ENCODE measurements at regions of chr17 and their contacts with region 1.

Region 1: GRCh38 chr17:7136266-7136877 is 21.8 kb upstream of the ASGR2 start:
- DNase-seq: peak; percentile 84
- ATAC-seq: no peak
- H3K4me3 Mint-ChIP-seq: no peak overlapping the region
- H3K27ac Mint-ChIP-seq: no peak overlapping the region
- H3K4me1 Mint-ChIP-seq: peaks cover 10% of the 10 kb centered on the region
- H3K27me3 Mint-ChIP-seq: peaks cover 4% of the 10 kb centered on the region

Region 2: DNA sequence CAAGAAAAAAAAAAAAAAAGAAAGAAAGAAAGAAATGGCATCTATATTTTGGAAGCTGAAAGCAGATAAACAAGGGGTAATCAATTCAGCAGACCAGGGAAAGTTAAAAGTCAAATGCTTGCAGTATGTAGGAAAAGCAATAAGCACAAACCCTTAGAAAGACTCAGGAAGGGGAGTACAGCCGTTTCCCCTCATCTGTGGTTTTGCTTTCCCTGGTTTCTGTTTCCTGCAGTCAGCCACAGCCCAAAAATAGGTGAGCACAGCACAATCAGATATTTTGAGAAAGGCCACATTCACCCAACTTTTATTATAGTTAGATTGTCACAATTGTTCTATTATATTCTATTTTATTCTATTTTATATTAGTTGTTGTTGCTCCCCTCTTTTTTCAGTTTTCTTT is 154.9 kb before region 1 on chr17:
- CTCF ChIA-PET with region 1: no interaction called
- POLR2A ChIA-PET with region 1: no interaction called
- DNase-seq: peak; percentile 27
- ATAC-seq: no peak
- H3K4me3 Mint-ChIP-seq: peak overlapping the region; percentile 18
- H3K27ac Mint-ChIP-seq: no peak overlapping the region
- H3K4me1 Mint-ChIP-seq: peaks cover 26% of the 10 kb centered on the region
- H3K27me3 Mint-ChIP-seq: no peaks in the 10 kb centered on the region

Region 3: GRCh38 chr17:7081341-7082062 is 54.9 kb before region 1 on chr17:
- CTCF ChIA-PET with region 1: interaction called, 13 read pairs
- POLR2A ChIA-PET with region 1: no interaction called
- DNase-seq: peak; percentile 81
- ATAC-seq: peak; percentile 84
- H3K4me3 Mint-ChIP-seq: peak overlapping the region; percentile 16
- H3K27ac Mint-ChIP-seq: no peak overlapping the region
- H3K4me1 Mint-ChIP-seq: peaks cover 36% of the 10 kb centered on the region
- H3K27me3 Mint-ChIP-seq: peaks cover 29% of the 10 kb centered on the region

Measured in activated CD8-positive, alpha-beta T cell treated with anti-CD3 and anti-CD28 coated beads, Interleukin-2, amount 10 ng/mL, durations not matched to agents 7 days and 5 days (primary cell).